ENCODE measurements at regions of chr5 and their contacts with region 1.

Region 1: DNA sequence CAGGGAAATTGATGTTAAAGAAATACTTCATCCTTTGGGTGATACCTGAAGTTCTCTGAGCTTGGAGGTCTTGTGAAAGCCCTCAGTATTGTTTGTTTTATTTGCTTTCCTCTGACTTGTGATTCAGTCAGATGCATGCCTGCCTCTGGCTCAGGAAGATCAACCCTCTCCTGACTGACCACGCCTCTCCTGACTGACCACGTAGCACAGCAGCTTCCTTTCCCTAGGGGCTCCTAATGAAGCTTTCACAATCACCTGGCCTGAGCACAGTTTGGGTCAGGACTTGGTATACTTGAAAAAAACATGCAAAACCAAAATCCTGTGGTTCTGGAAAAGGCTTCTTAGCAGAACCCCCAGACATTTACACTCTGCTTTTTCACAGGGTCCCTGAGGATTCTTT is 3.8 kb downstream of the TGFBI start:
- DNase-seq: no peak
- H3K4me3 ChIP-seq: peak overlapping the region; percentile 89
- CTCF ChIP-seq: no peak

Region 2: DNA sequence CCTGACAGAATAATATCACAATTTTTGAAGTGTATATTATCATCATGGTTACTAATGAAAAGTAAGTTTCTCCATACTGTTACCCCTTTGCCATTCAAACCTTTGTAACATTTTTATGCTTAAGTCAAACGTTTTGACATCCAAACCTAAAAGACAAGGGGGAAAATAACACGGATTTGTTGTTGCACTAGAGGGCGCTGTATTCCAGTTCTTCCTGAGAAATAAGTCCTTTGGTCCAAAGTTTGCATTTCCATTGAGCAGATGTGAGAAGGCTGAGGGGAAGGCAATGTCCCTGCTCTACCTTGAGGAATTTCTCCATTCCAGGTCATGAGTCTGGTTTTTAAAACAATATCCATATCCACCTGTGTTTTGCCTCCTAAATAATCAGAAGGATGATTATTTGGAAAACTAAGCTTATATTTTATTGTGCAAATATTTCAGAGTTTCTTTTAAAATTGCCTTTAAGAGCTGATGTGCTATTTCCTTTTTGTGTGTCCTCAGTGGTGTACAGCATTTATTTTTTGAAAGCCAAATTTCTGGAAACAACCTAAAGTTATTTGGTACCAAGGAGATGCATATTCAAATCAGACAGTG is 87.5 kb before region 1 on chr5:
- in situ Hi-C with region 1: loop called (anchors 5 kb)
- DNase-seq: peak; percentile 87
- H3K4me3 ChIP-seq: no peak overlapping the region
- CTCF ChIP-seq: peak; percentile 67